SK-N-SH (cell line): ENCODE measurements at regions of chr6 and their contacts with region 1.

Region 1: DNA sequence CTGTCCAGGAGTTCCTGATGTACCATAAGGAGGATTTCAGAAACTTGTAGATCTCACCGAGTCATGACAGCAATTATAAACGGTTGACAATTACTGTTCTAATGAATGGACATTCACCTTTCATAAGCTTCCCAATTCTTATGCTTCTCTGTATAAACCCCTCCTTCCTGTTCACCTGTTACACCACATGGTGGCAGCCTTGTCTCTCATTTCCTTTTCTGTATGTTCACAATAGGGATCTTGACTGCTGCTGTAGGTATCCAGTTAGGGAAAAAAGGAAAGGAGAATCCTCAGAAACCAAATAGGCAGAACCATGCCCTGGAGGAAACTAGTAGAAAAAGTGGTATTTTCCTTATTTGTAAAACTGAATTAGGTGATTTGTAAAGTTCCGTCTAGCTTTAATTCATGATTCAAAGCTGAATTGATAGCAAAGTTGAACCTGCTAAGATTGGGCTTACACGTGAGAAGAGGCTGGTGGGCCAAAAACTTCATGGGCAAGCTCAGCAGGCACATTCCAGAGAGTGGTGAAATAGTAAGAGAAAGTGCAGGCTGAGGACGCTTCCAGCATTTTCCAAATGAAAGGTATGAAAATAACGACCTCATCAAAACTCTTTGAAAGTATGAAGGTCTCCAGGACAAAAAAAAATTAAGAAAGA is 29.0 kb upstream of the TBPL1 start:
- DNase-seq: peak; percentile 62
- H3K4me3 ChIP-seq: no peak overlapping the region; a peak in 1 of 4 replicates
- H3K27ac ChIP-seq: no peak overlapping the region
- H3K4me1 ChIP-seq: no peaks in the 10 kb centered on the region
- H3K27me3 ChIP-seq: peaks cover 17% of the 10 kb centered on the region
- CTCF ChIP-seq: peak; percentile 90
- EP300 ChIP-seq: no peak
- RAD21 ChIP-seq: peak; percentile 98

Region 2: DNA sequence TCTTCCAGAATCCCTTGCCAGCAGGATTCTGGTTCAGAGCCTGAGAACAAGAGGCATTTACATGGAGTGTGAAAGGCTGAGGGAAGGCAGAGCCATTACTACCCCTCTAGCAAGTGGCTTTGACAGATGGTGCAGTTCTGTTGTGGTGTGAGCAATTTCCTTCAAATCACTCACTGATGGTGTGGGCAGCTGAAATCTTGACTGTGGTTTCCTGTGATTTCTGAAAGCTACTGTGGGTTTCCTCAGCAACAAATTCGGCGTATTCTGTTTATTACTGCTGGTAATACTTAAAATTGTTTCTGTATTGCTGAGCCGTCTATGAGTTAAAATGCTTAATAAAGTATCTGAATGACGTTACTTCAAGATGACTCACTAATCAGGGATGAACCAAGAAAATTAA is 216.6 kb before region 1 on chr6:
- CTCF ChIA-PET with region 1: no interaction called
- POLR2A ChIA-PET with region 1: no interaction called
- DNase-seq: no peak
- H3K4me3 ChIP-seq: no peak overlapping the region
- H3K27ac ChIP-seq: no peak overlapping the region
- H3K4me1 ChIP-seq: no peaks in the 10 kb centered on the region
- H3K27me3 ChIP-seq: no peaks in the 10 kb centered on the region; the same call in 1 of the 2 replicates
- CTCF ChIP-seq: no peak
- EP300 ChIP-seq: no peak
- RAD21 ChIP-seq: no peak

Region 3: GRCh38 chr6:133899556-133899955 is 24.5 kb before region 1 on chr6:
- CTCF ChIA-PET with region 1: interaction called, 21 read pairs
- POLR2A ChIA-PET with region 1: no interaction called
- DNase-seq: no peak
- H3K4me3 ChIP-seq: no peak overlapping the region
- H3K27ac ChIP-seq: no peak overlapping the region
- H3K4me1 ChIP-seq: no peaks in the 10 kb centered on the region
- H3K27me3 ChIP-seq: peaks cover 32% of the 10 kb centered on the region; the same call in 1 of the 2 replicates
- CTCF ChIP-seq: no peak
- EP300 ChIP-seq: no peak
- RAD21 ChIP-seq: no peak

Region 4: GRCh38 chr6:133952815-133953633 is 29.0 kb after region 1 on chr6 and contains the start of gene TBPL1:
- CTCF ChIA-PET with region 1: interaction called, 13 read pairs
- POLR2A ChIA-PET with region 1: interaction called, 3 read pairs
- DNase-seq: peak; percentile 95
- H3K4me3 ChIP-seq: peak within 1 kb of the TSS; percentile 77 to 98
- H3K27ac ChIP-seq: peak within 1 kb of the TSS; percentile 92 to 94
- H3K4me1 ChIP-seq: peaks cover 6 to 24% of the 10 kb centered on the region in 2 experiments; a peak in 3 of 4 replicates
- H3K27me3 ChIP-seq: no peaks in the 10 kb centered on the region
- CTCF ChIP-seq: no peak
- EP300 ChIP-seq: peak; percentile 35 to 37; a peak in 1 of 4 replicates
- RAD21 ChIP-seq: no peak
- polyA plus RNA-seq, gene TBPL1: 16.3 and 22.4 TPM in 2 replicates

Region 5: DNA sequence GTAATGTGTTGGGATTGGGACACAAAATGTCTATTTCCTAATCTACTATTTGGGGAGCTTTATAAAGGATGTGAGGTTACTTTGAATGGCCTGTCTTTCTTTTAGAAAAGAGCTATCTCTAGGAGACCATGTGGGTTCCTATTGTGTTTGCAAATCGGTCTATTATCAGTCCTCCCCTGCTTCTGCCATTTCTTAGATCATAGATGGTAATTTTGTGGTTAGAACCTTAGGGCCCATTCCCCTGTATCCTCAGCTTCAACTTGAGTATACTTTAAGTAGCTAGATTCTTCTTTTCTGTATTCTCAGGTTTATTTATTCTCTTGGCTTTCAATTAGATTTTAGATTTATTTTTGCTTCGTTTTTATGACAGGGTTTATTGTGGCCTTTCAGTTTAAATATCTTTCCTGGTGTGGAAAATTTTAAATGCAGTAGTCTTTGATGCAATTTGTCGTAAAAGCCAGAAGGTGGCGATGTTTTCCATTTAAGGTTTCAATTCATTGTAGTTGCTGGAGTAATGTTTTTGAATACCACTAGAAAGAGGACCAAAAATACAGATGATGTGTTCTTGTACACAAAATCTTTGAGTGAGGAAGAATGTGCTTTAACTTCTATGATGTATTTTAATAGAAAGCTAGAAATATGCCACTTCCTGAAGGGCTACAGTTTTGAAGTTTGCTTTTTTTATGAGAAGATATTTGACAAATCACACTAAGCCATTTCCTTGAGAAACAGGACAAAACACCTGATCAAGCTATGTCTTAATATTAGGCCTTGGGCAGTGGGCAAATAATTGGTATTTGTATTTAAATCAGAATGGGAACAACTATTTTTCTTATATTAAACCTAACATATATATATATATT is 49.3 kb after region 1 on chr6:
- CTCF ChIA-PET with region 1: interaction called, 21 read pairs
- POLR2A ChIA-PET with region 1: no interaction called
- DNase-seq: peak; percentile 47
- H3K4me3 ChIP-seq: no peak overlapping the region
- H3K27ac ChIP-seq: peak overlapping the region in 1 of 2 experiments; percentile 1; a peak in 1 of 4 replicates
- H3K4me1 ChIP-seq: peaks cover 6 to 19% of the 10 kb centered on the region in 2 experiments; a peak in 2 of 4 replicates
- H3K27me3 ChIP-seq: no peaks in the 10 kb centered on the region
- CTCF ChIP-seq: peak; percentile 85
- EP300 ChIP-seq: no peak
- RAD21 ChIP-seq: peak; percentile 74

Region 6: DNA sequence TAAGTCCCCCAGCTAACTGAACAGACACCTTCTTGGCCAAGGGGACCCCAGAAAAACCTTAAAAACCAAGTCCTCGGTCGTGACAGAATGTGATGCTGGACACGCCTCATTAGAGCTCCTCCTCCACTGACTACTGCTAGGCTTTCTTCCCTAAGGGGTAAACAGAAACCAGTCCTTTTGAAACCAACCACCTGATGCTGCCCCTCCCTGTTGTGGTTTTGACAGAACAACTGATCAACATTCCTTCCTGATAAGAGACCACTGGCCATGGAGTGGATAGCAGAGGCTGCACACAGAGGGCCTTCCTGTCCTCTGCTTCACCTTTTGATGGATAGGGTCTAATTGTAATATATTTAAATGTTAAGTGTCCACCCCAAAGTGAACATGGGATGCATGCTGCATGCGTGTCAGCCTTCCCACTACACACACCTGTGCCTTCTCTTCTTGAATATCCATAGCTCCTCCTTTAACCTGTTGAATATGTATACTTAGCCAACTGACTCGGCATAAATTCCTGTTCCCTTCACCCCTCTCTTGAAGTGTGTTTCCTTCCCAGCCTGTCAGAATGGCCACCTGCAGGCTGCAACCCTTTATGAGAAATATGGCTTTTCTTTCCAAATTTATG is 156.2 kb after region 1 on chr6:
- CTCF ChIA-PET with region 1: interaction called, 49 read pairs
- POLR2A ChIA-PET with region 1: no interaction called
- DNase-seq: no peak
- H3K4me3 ChIP-seq: no peak overlapping the region
- H3K27ac ChIP-seq: no peak overlapping the region
- H3K4me1 ChIP-seq: no peaks in the 10 kb centered on the region
- H3K27me3 ChIP-seq: no peaks in the 10 kb centered on the region; the same call in 1 of the 2 replicates
- CTCF ChIP-seq: no peak
- EP300 ChIP-seq: no peak
- RAD21 ChIP-seq: no peak

Region 7: DNA sequence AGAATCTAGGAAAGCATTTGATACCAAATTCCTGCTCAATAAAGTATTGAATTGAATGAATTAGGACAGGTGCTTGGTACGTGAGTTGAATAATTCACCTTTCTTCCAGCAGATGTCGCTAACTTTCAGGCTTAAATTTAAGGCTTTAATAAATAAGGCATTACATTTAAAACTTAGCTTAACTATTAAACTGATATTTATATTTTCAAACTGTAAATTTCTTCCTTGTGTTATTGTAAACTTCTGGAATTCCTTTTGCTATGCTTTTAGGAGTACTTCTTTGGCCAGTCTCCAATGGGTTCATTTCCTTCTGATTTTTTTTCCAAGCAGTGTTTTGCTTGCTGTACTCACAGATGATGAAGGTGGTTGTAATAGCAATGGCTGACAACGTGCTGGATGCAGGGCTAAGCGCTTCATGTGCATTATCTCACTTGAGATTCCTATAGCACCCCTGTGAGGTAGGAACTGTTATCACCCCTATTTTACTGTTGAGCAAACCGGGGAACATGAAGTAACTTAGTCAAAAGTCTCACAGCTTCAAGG is 199.7 kb after region 1 on chr6:
- CTCF ChIA-PET with region 1: interaction called, 10 read pairs
- POLR2A ChIA-PET with region 1: no interaction called
- DNase-seq: peak; percentile 53
- H3K4me3 ChIP-seq: no peak overlapping the region; a peak in 1 of 4 replicates
- H3K27ac ChIP-seq: no peak overlapping the region
- H3K4me1 ChIP-seq: no peaks in the 10 kb centered on the region
- H3K27me3 ChIP-seq: no peaks in the 10 kb centered on the region
- CTCF ChIP-seq: peak; percentile 86
- EP300 ChIP-seq: no peak
- RAD21 ChIP-seq: peak; percentile 58

Region 8: DNA sequence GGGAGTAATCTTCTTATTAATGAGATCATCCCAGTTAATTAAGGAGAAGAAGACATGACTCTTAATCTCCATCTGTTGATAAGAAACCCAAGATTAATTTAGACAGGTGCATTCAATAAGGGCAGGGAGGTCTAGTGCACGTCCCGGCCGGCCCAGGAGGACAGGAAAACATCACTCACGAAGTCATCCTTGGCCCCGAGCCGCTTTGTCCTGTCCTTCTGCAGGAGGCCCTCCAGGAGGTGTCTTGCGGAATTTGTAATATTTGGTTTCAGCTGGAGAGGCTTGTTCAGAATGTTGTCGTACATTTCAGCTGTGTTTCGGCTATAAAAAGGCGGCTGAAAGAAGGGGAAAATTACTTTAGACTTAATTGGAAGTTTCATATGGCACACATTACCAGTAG is 246.8 kb after region 1 on chr6:
- CTCF ChIA-PET with region 1: no interaction called
- POLR2A ChIA-PET with region 1: no interaction called
- DNase-seq: no peak
- H3K4me3 ChIP-seq: peak overlapping the region; percentile 76 to 78; a peak in 3 of 4 replicates
- H3K27ac ChIP-seq: peak overlapping the region in 1 of 2 experiments; percentile 94; a peak in 1 of 4 replicates
- H3K4me1 ChIP-seq: peaks cover 16 to 43% of the 10 kb centered on the region in 2 experiments
- H3K27me3 ChIP-seq: no peaks in the 10 kb centered on the region
- CTCF ChIP-seq: peak; percentile 19
- EP300 ChIP-seq: peak; percentile 23 to 52; a peak in 2 of 4 replicates
- RAD21 ChIP-seq: no peak

Region 9: GRCh38 chr6:135062735-135063134 is 1138.7 kb after region 1 on chr6:
- CTCF ChIA-PET with region 1: no interaction called
- POLR2A ChIA-PET with region 1: no interaction called
- DNase-seq: no peak
- H3K4me3 ChIP-seq: no peak overlapping the region
- H3K27ac ChIP-seq: no peak overlapping the region
- H3K4me1 ChIP-seq: no peaks in the 10 kb centered on the region
- H3K27me3 ChIP-seq: no peaks in the 10 kb centered on the region
- CTCF ChIP-seq: no peak
- EP300 ChIP-seq: no peak
- RAD21 ChIP-seq: no peak